Psoas muscle (tissue), 8 donors: ENCODE measurements at regions of chr14 and their contacts with region 1.

Region 1: GRCh38 chr14:70816525-70816924 is 7.2 kb upstream of the MAP3K9 start:
- DNase-seq: no peak
- ATAC-seq: no peak
- H3K4me3 ChIP-seq: no peak overlapping the region
- H3K27ac ChIP-seq: no peak overlapping the region
- H3K4me1 ChIP-seq: no peaks in the 10 kb centered on the region
- H3K27me3 ChIP-seq: peaks cover 0 to 12% (median 0%) of the 10 kb centered on the region in 3 donors
- CTCF ChIP-seq: no peak

Region 2: GRCh38 chr14:70622111-70622712 is 194.3 kb before region 1 on chr14:
- intact Hi-C with region 1: loop called (anchors 5 kb)
- DNase-seq: no peak
- ATAC-seq: peak in 3 of 4 donors; percentile 59 to 65 (median 64)
- H3K4me3 ChIP-seq: no peak overlapping the region
- H3K27ac ChIP-seq: no peak overlapping the region
- H3K4me1 ChIP-seq: no peaks in the 10 kb centered on the region
- H3K27me3 ChIP-seq: no peaks in the 10 kb centered on the region
- CTCF ChIP-seq: peak; percentile 58

Region 3: GRCh38 chr14:70873627-70874026 is 57.1 kb after region 1 on chr14:
- intact Hi-C with region 1: no loop called
- DNase-seq: no peak
- ATAC-seq: no peak
- H3K4me3 ChIP-seq: no peak overlapping the region
- H3K27ac ChIP-seq: no peak overlapping the region
- H3K4me1 ChIP-seq: no peaks in the 10 kb centered on the region
- H3K27me3 ChIP-seq: peaks cover 0 to 4% (median 0%) of the 10 kb centered on the region in 3 donors
- CTCF ChIP-seq: no peak

Region 4: GRCh38 chr14:70955543-70956480 is 139.3 kb after region 1 on chr14:
- intact Hi-C with region 1: loop called in 1 of 2 experiments (anchors 5 kb)
- DNase-seq: no peak
- ATAC-seq: peak in 3 of 4 donors; percentile 57 to 71 (median 70)
- H3K4me3 ChIP-seq: no peak overlapping the region
- H3K27ac ChIP-seq: no peak overlapping the region
- H3K4me1 ChIP-seq: peaks cover 29% of the 10 kb centered on the region
- H3K27me3 ChIP-seq: no peaks in the 10 kb centered on the region
- CTCF ChIP-seq: peak; percentile 42